Activated CD4-positive, alpha-beta T cell treated with anti-CD3 and anti-CD28 coated beads, Interleukin-2, amount 10 ng/mL, durations not matched to agents 24 days and 14 days (primary cell): ENCODE measurements at regions of chr5 and their contacts with region 1.

Region 1: GRCh38 chr5:40333459-40334244 is 346.1 kb upstream of the PTGER4 start:
- DNase-seq: peak; percentile 59
- H3K4me3 Mint-ChIP-seq: no peak overlapping the region
- H3K27ac Mint-ChIP-seq: no peak overlapping the region
- H3K4me1 Mint-ChIP-seq: peaks cover 19% of the 10 kb centered on the region
- H3K27me3 Mint-ChIP-seq: no peaks in the 10 kb centered on the region

Region 2: DNA sequence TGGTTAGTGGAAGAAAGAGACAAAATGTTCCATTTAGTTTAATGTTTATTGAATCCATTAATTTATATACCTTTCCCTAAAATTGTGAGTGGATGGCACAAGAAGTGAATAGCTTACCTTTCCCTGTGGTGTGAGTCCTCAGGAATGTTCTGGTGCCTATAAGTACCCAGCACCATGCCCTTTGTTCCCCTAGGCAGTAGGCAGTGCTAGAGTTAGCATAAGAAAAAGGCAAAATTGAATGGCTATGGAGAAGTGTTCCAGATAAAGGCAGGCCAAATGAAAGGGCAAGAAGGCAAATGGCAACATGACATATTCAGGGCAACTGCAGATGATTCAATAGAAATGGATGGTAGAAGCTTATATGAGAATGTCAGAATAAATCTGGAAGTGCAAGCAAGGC is 24.8 kb before region 1 on chr5:
- intact Hi-C with region 1: no loop called
- DNase-seq: no peak
- H3K4me3 Mint-ChIP-seq: no peak overlapping the region
- H3K27ac Mint-ChIP-seq: no peak overlapping the region
- H3K4me1 Mint-ChIP-seq: peaks cover 9% of the 10 kb centered on the region
- H3K27me3 Mint-ChIP-seq: no peaks in the 10 kb centered on the region

Region 3: DNA sequence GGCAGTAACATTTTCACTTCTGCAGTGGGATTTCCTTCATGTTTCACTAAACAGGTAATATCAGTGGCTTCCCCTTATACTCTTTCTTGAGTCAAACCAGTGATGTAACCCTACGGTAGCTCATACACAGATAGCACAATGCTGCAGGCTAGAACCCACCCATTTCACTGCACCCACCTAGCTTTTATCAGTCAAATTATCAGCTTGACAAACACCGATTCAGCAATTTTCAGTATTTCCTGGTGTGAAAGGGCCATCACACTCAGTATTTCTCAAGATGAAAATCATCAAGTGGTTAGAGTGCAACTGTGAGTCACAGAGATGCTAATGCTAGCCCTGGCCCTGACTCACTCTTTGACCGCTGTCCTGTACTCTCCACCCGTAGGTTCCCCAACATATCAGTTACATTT is 103.8 kb after region 1 on chr5:
- intact Hi-C with region 1: loop called (anchors 2 kb)
- DNase-seq: peak; percentile 66
- H3K4me3 Mint-ChIP-seq: peak overlapping the region; percentile 16
- H3K27ac Mint-ChIP-seq: peak overlapping the region; percentile 79
- H3K4me1 Mint-ChIP-seq: peaks cover 69% of the 10 kb centered on the region
- H3K27me3 Mint-ChIP-seq: no peaks in the 10 kb centered on the region